ENCODE measurements at regions of chr16 and their contacts with region 1.

Region 1: GRCh38 chr16:23423496-23424049 is 29.4 kb downstream of the COG7 start:
- DNase-seq: peak; percentile 97
- H3K4me3 ChIP-seq: no peak overlapping the region
- H3K27ac ChIP-seq: peak overlapping the region; percentile 88 to 96 (median 94)
- H3K4me1 ChIP-seq: peaks cover 0 to 34% (median 25%) of the 10 kb centered on the region in 4 donors
- H3K27me3 ChIP-seq: no peaks in the 10 kb centered on the region
- CTCF ChIP-seq: no peak
- EP300 ChIP-seq: peak; percentile 76 to 98 (median 94)
- POLR2A ChIP-seq: no peak

Region 2: GRCh38 chr16:21946889-21947635 is 1476.5 kb before region 1 on chr16:
- intact Hi-C with region 1: no loop called
- DNase-seq: no peak
- H3K4me3 ChIP-seq: no peak overlapping the region
- H3K27ac ChIP-seq: no peak overlapping the region
- H3K4me1 ChIP-seq: peaks cover 0 to 18% (median 13%) of the 10 kb centered on the region in 4 donors
- H3K27me3 ChIP-seq: no peaks in the 10 kb centered on the region
- CTCF ChIP-seq: no peak
- EP300 ChIP-seq: no peak
- POLR2A ChIP-seq: no peak

Region 3: DNA sequence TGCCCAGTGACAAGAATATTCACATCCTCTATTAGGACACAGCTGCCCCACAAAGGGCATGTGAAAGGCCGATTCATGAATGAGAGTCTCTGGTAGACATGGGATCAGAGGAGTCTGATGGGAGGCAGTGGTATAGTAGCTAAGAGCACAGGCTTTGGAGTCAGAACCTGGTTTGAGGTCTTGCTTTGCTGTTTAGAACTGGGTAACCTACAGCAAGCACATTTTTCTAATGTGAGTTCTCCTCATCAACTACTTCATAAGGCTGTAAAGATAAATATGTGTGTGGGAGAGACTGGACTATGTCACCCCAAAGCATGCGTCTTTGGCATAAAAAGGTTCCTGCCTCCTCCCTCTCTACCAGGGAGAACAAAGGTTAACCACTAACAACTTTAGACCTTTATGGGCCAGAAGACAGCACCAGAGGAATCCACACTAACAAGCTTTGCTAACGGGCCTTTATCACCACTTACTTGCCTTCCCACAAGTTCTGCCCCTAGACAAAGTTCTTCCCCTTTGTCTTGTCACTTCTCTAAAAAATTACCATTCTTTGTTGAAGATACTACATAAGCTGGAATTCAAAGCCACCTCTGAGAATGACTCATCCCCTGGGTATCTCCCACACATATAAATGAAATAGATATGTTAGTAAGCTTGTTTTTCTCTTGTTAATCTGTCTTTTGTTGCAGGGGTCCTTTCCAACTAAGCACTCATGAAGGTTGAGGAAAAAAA is 1070.2 kb before region 1 on chr16:
- intact Hi-C with region 1: loop called (anchors 10 kb)
- DNase-seq: no peak
- H3K4me3 ChIP-seq: no peak overlapping the region
- H3K27ac ChIP-seq: peak overlapping the region; percentile 15 to 78 (median 66)
- H3K4me1 ChIP-seq: peaks cover 0 to 38% (median 24%) of the 10 kb centered on the region in 4 donors
- H3K27me3 ChIP-seq: no peaks in the 10 kb centered on the region
- CTCF ChIP-seq: no peak
- EP300 ChIP-seq: peak in 1 of 4 donors; percentile 26
- POLR2A ChIP-seq: no peak

Region 4: DNA sequence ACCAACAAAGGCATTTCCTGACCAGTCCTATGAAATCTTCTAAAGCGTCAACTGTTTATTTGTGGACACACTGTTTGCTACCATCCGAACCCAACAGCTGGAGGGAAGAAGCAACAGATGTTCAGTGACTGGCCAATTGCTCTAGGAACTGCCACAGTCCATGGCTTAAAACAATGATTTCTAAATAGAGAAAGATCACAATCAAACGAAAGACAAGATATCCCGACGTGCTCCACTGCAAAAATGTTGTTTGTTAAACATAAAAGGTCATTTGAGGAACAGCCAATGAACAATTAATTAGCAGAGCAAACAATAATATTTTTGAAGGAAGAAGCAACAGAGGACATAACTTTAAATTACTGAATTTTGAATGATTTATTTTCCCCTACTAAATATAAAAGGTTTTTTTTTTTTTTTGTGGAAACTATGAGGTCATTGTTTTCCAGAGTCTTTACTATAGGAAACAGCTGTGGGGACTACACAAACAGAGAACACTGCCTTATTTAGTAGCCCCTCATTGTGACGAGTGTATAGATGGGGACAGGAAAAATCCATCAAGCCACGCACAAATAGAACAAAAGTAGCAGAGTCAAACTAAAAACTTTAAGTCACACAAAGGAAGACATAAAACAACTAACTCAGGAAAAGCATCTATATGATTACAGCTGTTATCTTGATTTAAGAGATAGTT is 291.5 kb before region 1 on chr16:
- intact Hi-C with region 1: loop called (anchors 5 kb)
- DNase-seq: no peak
- H3K4me3 ChIP-seq: peak overlapping the region in 3 of 4 donors; percentile 29 to 36 (median 30)
- H3K27ac ChIP-seq: peak overlapping the region; percentile 81 to 89 (median 84)
- H3K4me1 ChIP-seq: peaks cover 0 to 56% (median 40%) of the 10 kb centered on the region in 4 donors
- H3K27me3 ChIP-seq: no peaks in the 10 kb centered on the region
- CTCF ChIP-seq: no peak
- EP300 ChIP-seq: no peak
- POLR2A ChIP-seq: no peak

Region 5: GRCh38 chr16:23316966-23317661 is 106.5 kb before region 1 on chr16:
- intact Hi-C with region 1: loop called (anchors 5 kb)
- DNase-seq: peak; percentile 73
- H3K4me3 ChIP-seq: peak overlapping the region in 1 of 4 donors; percentile 3
- H3K27ac ChIP-seq: peak overlapping the region in 3 of 4 donors; percentile 48 to 71 (median 59)
- H3K4me1 ChIP-seq: peaks cover 0 to 17% (median 6%) of the 10 kb centered on the region in 4 donors
- H3K27me3 ChIP-seq: no peaks in the 10 kb centered on the region
- CTCF ChIP-seq: no peak
- EP300 ChIP-seq: peak in 2 of 4 donors; percentile 18 to 28
- POLR2A ChIP-seq: no peak

Region 6: DNA sequence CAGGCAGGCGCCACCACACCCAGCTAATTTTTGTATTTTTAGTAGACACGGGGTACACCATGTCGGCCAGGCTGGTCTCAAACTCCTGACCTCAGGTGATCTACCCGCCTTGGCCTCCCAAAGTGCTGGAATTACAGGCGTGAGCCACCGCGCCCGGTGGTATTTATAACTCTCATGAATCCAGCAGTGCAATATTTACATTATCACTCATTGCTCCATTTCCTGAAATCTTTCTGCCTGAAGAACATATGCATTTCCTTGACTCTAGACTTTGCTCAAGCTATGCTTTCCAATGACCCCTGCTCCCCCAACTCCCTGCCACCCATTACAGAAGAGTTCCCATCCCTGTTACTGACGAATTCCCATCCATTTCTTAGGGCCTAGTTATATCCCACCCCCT is 192.2 kb after region 1 on chr16:
- intact Hi-C with region 1: no loop called
- DNase-seq: no peak
- H3K4me3 ChIP-seq: no peak overlapping the region
- H3K27ac ChIP-seq: no peak overlapping the region
- H3K4me1 ChIP-seq: no peaks in the 10 kb centered on the region
- H3K27me3 ChIP-seq: no peaks in the 10 kb centered on the region
- CTCF ChIP-seq: no peak
- EP300 ChIP-seq: no peak
- POLR2A ChIP-seq: no peak

Region 7: GRCh38 chr16:23635958-23636357 is 212.4 kb after region 1 on chr16:
- intact Hi-C with region 1: no loop called
- DNase-seq: no peak
- H3K4me3 ChIP-seq: no peak overlapping the region
- H3K27ac ChIP-seq: no peak overlapping the region
- H3K4me1 ChIP-seq: peaks cover 0 to 13% (median 10%) of the 10 kb centered on the region in 4 donors
- H3K27me3 ChIP-seq: no peaks in the 10 kb centered on the region
- CTCF ChIP-seq: no peak
- EP300 ChIP-seq: no peak
- POLR2A ChIP-seq: no peak

Region 8: DNA sequence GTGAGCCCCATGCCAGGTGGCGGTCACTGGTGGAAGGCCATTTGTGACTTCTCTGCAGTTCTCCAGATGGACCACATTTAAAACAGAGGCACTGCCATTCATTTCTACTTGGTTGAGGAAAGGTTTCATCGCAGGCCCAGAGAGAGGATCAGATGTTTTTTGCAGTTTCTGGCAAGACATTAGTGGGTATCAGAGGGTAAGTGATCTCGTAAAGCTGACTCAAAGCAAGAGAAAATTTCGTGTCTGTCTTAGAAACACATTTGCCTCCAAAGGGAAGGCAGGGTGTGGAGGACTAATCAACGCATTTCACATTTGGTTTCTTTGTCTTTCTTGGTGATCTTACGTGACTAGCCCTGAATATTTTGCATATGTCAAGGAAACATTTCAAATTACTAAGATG is 494.0 kb after region 1 on chr16:
- intact Hi-C with region 1: loop called (anchors 5 kb)
- DNase-seq: no peak
- H3K4me3 ChIP-seq: no peak overlapping the region
- H3K27ac ChIP-seq: no peak overlapping the region
- H3K4me1 ChIP-seq: peaks cover 0 to 10% (median 0%) of the 10 kb centered on the region in 4 donors
- H3K27me3 ChIP-seq: no peaks in the 10 kb centered on the region
- CTCF ChIP-seq: no peak
- EP300 ChIP-seq: no peak
- POLR2A ChIP-seq: no peak